Transverse colon (tissue), 4 donors: ENCODE measurements at regions of chr18 and their contacts with region 1.

Region 1: GRCh38 chr18:13166023-13166422 is 52.5 kb upstream of the LDLRAD4 start:
- DNase-seq: no peak
- H3K4me3 ChIP-seq: no peak overlapping the region
- H3K27ac ChIP-seq: no peak overlapping the region
- H3K4me1 ChIP-seq: no peaks in the 10 kb centered on the region
- H3K27me3 ChIP-seq: no peaks in the 10 kb centered on the region
- CTCF ChIP-seq: no peak
- EP300 ChIP-seq: no peak
- POLR2A ChIP-seq: no peak

Region 2: DNA sequence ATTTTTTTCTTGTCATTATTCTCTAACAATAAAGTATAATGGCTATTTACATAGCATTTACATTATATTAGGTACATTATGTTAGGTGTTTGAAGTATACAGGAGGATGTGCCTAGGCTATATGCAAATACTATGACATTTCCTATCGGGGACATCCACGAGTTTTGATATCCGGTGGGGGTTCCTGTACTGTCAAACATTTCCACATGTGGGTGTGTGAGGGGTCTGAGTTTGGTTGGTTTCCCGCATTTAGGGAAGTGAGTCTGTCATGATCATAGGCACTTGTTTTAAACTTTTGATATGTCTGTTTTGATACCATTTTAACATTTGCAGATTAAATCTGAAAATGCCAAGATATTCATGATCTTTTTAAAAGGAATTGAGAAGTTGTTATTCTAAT is 98.9 kb before region 1 on chr18:
- in situ Hi-C with region 1: no loop called
- intact Hi-C with region 1: no loop called
- DNase-seq: no peak
- H3K4me3 ChIP-seq: no peak overlapping the region
- H3K27ac ChIP-seq: no peak overlapping the region
- H3K4me1 ChIP-seq: no peaks in the 10 kb centered on the region
- H3K27me3 ChIP-seq: no peaks in the 10 kb centered on the region
- CTCF ChIP-seq: no peak
- EP300 ChIP-seq: no peak
- POLR2A ChIP-seq: no peak

Region 3: DNA sequence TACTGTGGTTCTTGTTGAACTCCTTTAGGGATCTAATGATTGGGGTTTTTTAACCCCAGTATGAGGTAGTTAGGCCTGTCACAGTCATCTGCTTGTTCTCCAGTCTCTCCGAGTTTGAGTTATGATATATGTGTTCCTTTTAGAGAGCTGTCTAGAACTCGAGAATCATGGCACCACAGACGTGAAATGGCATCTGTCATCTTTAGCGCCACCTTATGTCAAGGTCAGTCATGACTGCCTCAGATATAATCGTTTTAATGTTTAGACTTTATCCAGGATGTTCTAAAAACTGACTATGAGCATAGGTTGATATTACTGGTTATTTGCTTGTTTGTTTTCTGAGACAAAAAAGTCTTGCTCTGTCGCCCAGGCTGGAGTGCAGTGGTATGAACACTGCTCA is 62.7 kb before region 1 on chr18:
- in situ Hi-C with region 1: loop called in 1 of 4 experiments (anchors 10 kb)
- intact Hi-C with region 1: no loop called
- DNase-seq: no peak
- H3K4me3 ChIP-seq: no peak overlapping the region
- H3K27ac ChIP-seq: no peak overlapping the region
- H3K4me1 ChIP-seq: no peaks in the 10 kb centered on the region
- H3K27me3 ChIP-seq: no peaks in the 10 kb centered on the region
- CTCF ChIP-seq: no peak
- EP300 ChIP-seq: no peak
- POLR2A ChIP-seq: no peak

Region 4: DNA sequence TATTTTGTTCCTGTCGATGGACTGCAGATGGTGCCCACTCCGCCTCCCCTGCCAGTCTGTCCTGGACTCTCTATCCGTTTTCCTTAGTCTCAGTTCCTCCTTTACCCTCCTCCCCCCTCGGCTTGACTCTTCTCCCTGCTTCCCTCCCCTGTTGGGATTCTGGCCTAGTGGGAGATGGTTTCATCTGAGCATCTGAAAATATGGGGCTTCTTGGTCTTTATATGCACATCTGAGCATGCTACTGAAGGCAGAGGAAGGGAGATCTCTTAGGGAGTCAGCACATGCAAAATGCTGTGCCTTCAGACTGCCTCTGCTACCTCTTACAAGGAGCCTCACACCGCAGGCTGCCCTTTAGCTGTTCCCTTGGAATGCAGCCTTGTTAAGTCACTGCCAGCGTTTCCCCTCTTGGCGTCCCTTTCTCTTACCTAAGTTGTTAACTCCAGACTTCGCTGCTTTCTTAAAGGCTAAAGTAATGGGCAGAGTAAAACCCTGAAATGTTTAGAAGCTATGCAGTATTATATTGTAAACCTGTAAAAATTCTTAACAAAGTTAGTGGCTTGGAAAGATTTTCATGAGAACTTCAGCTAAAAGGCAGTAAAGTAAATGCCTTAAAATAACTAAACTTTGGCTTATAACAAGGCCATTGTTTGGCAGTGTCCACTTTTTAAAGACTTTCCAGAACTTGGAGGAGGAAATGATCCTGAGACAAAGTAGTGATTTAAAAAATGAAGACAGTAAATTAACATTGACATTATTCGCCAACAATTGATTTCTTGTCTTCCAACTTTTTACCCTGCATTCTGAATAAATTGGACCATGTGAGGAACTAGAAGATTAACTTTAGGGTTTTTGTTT is 102.4 kb after region 1 on chr18:
- in situ Hi-C with region 1: no loop called
- intact Hi-C with region 1: no loop called
- DNase-seq: no peak
- H3K4me3 ChIP-seq: no peak overlapping the region
- H3K27ac ChIP-seq: peak overlapping the region; percentile 58 to 74 (median 65)
- H3K4me1 ChIP-seq: peaks cover 16 to 50% (median 30%) of the 10 kb centered on the region in 4 donors
- H3K27me3 ChIP-seq: no peaks in the 10 kb centered on the region
- CTCF ChIP-seq: no peak
- EP300 ChIP-seq: no peak
- POLR2A ChIP-seq: no peak